ENCODE measurements at regions of chr17 and their contacts with region 1.

Region 1: DNA sequence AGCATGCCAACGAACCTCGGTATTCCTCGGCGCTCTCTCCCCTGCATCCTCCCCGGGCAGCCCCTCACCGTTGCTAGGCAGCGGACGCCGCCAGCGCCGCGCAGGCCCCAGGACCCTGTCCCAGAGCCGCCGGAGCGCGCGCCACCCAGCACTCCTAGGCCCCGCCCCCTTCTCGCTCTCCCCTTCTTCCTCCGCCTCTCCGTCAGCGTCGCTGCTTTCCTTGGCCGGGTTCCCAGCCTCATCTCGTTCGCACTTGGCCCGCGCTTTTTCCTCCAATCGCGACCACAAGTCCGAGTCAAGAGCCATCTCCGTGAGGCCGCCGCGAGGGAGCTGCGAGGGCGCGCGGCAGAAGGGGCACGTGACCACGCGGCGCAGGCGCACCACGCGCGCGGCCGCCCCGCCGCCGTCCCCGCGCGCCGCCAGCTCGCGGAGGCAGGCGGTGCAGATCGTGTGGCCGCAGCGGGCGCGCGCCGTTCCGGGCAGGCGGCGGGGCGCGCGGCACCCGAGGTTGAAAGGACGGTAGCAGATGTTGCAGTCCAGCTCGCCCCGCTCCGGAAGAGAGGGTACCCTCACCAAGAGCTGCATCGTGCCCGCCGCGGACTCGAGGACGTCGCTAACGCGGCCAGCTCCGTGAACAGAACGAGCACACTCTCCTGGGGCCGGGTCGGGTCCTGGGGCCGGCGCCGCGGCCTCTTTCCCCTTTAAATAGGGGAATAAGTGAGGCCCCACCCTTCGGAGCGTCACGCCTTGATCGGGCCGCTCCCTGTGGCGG is at the start of gene RNF227:
- DNase-seq: peak; percentile 95
- ATAC-seq: peak; percentile 88
- H3K4me3 Mint-ChIP-seq: peak within 1 kb of the TSS; percentile 86
- H3K27ac Mint-ChIP-seq: peak within 1 kb of the TSS; percentile 82
- H3K4me1 Mint-ChIP-seq: peaks cover 27% of the 10 kb centered on the region
- H3K27me3 Mint-ChIP-seq: no peaks in the 10 kb centered on the region
- total RNA-seq, gene RNF227: 3.8 to 5.6 TPM

Region 2: GRCh38 chr17:7887482-7888183 is 28.2 kb before region 1 on chr17:
- CTCF ChIA-PET with region 1: interaction called, 4 read pairs
- POLR2A ChIA-PET with region 1: no interaction called
- intact Hi-C with region 1: loop called in 1 of 2 experiments (anchors 1 kb)
- DNase-seq: peak; percentile 94
- ATAC-seq: peak; percentile 79
- H3K4me3 Mint-ChIP-seq: no peak overlapping the region
- H3K27ac Mint-ChIP-seq: no peak overlapping the region
- H3K4me1 Mint-ChIP-seq: peaks cover 4% of the 10 kb centered on the region
- H3K27me3 Mint-ChIP-seq: no peaks in the 10 kb centered on the region

Region 3: DNA sequence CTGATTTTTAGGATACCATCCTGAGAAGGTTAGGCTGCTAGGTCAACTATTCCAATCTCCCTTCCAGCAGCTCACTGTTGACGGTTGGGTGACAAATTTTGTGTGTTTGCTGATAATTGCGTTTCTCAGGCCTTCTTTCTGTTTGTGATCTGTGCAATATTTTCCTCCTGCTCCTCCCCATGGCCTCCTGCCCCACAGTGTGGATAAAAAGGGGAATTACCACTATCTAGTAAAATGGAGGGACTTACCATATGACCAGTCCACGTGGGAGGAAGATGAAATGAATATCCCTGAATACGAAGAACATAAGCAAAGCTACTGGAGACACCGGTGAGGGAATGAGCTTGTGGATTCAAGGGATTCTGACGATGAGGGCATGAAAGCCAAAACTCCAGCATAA is 18.0 kb before region 1 on chr17:
- CTCF ChIA-PET with region 1: interaction called, 13 read pairs
- POLR2A ChIA-PET with region 1: no interaction called
- intact Hi-C with region 1: no loop called
- DNase-seq: peak; percentile 33
- ATAC-seq: peak; percentile 82
- H3K4me3 Mint-ChIP-seq: no peak overlapping the region
- H3K27ac Mint-ChIP-seq: peak overlapping the region; percentile 55
- H3K4me1 Mint-ChIP-seq: peaks cover 16% of the 10 kb centered on the region
- H3K27me3 Mint-ChIP-seq: no peaks in the 10 kb centered on the region

Region 4: DNA sequence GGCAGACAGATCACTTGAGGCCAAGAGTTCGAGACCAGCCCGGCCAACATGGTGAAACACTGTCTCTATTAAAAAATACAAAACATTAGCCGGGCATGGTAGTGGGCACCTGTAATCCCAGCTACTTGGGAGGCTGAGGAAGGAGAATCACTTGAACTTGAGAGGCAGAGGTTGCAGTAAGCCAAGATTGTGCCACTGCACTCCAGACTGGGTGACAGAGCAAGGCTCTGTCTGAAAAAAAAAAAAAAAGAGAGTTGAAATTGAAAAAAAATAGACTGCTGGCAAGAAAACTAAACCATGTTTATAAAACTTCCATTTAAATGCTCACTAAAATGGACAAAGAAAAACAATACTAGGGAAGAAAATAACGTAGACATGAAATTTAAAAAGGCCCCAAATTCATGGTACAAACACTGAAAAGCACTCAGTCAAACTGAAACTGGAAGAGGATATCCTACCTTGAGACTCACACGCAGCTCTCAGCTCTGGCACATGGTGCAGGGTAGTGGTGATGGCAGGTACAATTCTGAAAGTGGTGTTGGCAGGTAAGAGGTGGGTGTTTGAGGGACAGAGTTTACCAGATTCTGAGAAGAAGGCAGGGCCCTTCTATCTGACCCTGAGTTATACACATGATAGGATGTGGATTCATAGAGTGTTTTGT is 35.5 kb after region 1 on chr17:
- CTCF ChIA-PET with region 1: no interaction called
- POLR2A ChIA-PET with region 1: no interaction called
- intact Hi-C with region 1: loop called in 1 of 2 experiments (anchors 2 kb)
- DNase-seq: peak; percentile 71
- ATAC-seq: peak; percentile 97
- H3K4me3 Mint-ChIP-seq: peak overlapping the region; percentile 4
- H3K27ac Mint-ChIP-seq: peak overlapping the region; percentile 83
- H3K4me1 Mint-ChIP-seq: peaks cover 22% of the 10 kb centered on the region
- H3K27me3 Mint-ChIP-seq: no peaks in the 10 kb centered on the region

Measured in activated CD4-positive, alpha-beta T cell treated with anti-CD3 and anti-CD28 coated beads for 36 hours (primary cell).